Ascending aorta (tissue), 2 donors: ENCODE measurements at regions of chr9 and their contacts with region 1.

Region 1: DNA sequence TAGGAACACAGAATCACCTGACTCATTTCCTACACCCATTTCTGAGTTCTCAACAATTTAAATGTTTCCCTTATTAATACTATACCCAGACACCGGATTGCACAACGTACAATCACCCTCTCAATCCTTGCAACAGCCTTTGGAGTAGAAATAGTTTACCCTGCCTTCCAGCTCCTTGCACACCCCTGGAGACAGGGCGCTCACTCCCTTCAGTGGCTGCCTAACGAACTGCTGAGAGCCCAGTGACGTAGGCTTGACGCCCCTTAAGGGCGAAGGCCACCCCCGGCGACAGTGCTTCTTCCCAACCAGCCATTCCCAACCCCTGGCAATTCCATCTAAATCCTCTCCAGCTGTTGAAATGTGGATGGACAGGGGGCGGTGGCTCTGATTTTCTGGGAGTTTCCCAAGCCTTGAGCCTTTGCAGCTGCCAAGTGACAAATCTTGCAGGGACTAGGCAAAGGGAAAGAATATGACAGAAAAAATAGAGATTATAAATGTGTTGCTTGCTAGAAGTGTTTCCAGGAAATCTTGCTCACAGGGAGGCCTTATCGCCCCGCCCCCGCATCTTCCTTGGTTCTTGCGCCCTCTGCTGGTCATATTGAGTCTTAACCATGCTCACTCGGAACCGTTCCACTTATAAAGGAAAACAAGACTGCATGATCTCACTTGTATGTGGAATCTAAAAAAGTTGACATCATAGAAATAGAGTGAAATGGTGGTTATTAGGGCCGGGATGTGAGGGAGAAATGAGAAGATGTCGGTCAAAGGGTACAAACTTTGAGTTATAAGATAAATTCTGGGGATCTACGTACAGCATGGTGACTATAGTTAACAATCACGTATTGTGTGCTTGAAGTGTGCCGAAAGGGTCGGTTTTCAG is 7.6 kb upstream of the BARX1 start:
- DNase-seq: peak in 1 of 2 donors; percentile 92
- H3K4me3 ChIP-seq: peak overlapping the region in 1 of 2 donors; percentile 22
- H3K27ac ChIP-seq: no peak overlapping the region
- H3K4me1 ChIP-seq: peaks cover 4 to 16% of the 10 kb centered on the region in 2 donors
- H3K27me3 ChIP-seq: peaks cover 32% of the 10 kb centered on the region
- CTCF ChIP-seq: peak; percentile 67 to 83 (median 73)

Region 2: DNA sequence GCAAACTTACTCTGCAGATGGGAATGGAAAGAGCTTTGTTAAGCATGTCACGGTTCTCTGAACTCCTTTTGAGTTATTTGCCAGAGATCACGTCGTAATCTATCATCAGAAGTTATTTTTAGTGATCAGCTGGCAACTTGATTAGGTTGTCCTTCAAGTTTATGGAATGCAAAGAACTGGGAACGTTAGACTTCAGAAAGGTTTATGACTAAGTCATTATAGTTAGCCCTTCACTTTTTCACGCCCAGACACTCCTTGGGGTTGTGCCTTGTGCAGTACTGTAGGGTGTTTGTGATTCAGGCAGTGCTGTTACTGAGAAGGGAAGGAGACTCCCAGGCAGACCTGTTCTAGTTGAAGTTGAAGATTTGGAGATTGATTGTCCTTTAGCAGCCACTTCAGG is 413.2 kb before region 1 on chr9:
- intact Hi-C with region 1: no loop called
- DNase-seq: no peak
- H3K4me3 ChIP-seq: no peak overlapping the region
- H3K27ac ChIP-seq: no peak overlapping the region
- H3K4me1 ChIP-seq: no peaks in the 10 kb centered on the region
- H3K27me3 ChIP-seq: no peaks in the 10 kb centered on the region
- CTCF ChIP-seq: no peak

Region 3: DNA sequence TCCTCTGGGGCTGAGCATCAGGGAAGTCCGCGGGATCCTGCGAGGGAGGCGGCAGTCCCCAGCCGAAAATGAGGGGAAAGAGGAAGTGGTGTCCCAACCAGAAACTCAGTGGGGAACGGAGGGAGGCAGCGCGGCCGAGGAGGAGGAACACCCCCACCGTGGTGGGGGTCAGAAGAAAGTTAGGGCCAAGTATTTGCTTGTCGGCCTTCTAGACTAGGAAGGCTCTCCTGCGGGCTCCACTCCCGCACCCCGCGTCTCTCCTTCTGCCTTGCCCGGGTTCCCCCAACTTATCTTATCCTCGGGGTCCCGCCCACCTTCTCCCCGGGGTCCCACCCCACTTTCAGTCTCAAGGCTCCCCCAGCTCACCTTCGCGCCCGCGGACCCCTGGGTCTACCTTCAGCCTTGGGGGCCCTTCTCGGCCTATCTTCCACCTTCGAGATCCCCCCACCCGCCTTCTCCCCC is 387.0 kb before region 1 on chr9:
- intact Hi-C with region 1: loop called (anchors 10 kb)
- DNase-seq: no peak
- H3K4me3 ChIP-seq: peak overlapping the region; percentile 81 to 98
- H3K27ac ChIP-seq: peak overlapping the region; percentile 95 to 97
- H3K4me1 ChIP-seq: peaks cover 6 to 31% of the 10 kb centered on the region in 2 donors
- H3K27me3 ChIP-seq: no peaks in the 10 kb centered on the region
- CTCF ChIP-seq: no peak

Region 4: DNA sequence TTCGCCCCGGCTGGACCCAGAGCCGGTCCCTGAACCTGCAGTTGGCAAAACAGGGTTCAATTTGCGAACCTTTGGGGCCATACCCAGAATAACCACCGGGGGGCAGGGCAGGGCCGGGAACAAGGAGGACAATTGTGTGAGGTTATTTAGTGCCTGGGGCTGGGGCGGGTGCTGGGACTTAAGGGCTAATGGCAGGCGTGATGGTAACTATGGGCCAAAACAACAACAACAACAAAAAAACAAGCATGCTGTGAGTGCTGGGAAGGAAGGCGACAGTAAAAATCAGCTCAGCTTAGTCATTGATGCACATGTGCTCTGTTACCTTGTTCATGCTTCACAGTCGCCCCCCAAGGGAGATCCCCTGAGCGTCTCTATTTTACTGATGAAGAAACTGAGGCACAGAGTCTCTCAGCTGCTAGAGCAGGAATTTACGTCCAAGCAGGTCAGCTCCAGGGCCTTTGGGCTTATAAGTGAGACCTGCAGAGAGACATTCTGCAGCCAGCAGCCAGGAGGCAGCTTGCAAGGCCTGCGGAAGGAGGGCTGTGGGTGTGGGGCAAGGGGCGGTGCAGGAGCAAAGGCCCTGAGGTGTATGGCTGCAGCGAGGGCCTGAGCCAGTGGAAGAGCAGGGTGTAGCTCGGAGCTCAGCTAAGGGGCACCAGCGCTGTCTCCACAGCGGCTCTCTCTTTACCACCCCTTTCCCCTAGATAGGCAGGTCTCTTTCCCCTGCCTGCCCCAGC is 280.4 kb before region 1 on chr9:
- intact Hi-C with region 1: loop called (anchors 1 kb)
- DNase-seq: peak in 1 of 2 donors; percentile 67
- H3K4me3 ChIP-seq: no peak overlapping the region
- H3K27ac ChIP-seq: no peak overlapping the region
- H3K4me1 ChIP-seq: no peaks in the 10 kb centered on the region
- H3K27me3 ChIP-seq: no peaks in the 10 kb centered on the region
- CTCF ChIP-seq: peak; percentile 48 to 78 (median 77)

Region 5: GRCh38 chr9:94084314-94084713 is 121.5 kb after region 1 on chr9 and contains the start of gene PTPDC1:
- intact Hi-C with region 1: no loop called
- DNase-seq: no peak
- H3K4me3 ChIP-seq: no peak within 1 kb of the TSS
- H3K27ac ChIP-seq: no peak within 1 kb of the TSS
- H3K4me1 ChIP-seq: no peaks in the 10 kb centered on the region
- H3K27me3 ChIP-seq: no peaks in the 10 kb centered on the region
- CTCF ChIP-seq: no peak
- total RNA-seq, gene PTPDC1: 5.9 TPM